Activated CD4-positive, alpha-beta memory T cell treated with anti-CD3 and anti-CD28 coated beads for 36 hours (primary cell): ENCODE measurements at regions of chr10 and their contacts with region 1.

Region 1: DNA sequence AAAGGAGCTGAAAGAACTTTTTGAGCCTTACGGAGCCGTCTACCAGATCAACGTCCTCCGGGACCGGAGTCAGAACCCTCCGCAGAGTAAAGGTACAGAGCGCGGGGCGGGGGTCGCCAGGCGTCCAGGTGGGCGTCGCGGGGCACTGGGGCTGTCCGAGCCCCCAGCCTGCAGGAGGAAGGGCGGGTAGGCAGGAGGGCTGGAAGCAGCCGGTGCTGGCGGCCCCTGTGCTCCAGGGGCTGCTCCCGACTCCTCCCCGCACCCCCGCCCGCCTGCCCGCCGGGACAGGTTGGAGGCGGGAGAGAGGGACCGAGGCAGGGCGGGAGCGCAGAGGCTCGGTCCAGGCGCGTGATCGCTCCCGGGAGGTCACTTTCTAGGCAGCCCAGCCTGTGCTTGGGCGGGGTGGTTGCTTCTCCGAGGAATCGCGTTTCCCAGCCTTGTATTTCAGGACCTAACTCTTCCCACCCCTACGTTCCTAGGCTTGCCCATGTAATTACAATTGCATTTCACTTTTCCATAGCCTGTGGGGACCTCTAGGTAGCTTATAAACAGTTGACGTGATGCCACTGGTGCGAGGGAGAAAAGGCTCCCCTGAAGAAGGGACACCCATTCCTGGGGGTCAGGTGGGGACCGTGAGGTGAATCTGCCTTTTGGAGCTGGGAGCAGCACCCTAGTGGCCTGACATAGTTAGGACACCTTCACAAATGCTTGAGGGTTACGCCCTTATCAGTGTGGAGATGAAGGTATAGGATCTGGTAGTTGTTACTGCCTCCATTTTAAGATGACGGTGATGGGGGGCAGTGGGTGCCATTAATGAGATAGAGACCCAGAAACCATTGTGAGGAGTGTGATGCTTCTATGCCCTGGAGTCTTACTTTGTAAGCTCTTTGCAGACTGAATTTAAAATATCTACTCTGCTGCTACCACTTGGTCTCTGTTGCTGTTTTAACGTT is 148.2 kb downstream of the CELF2 start:
- DNase-seq: peak; percentile 83
- H3K4me3 Mint-ChIP-seq: no peak overlapping the region
- H3K27ac Mint-ChIP-seq: peak overlapping the region; percentile 100
- H3K4me1 Mint-ChIP-seq: peaks cover 23% of the 10 kb centered on the region
- H3K27me3 Mint-ChIP-seq: no peaks in the 10 kb centered on the region

Region 2: DNA sequence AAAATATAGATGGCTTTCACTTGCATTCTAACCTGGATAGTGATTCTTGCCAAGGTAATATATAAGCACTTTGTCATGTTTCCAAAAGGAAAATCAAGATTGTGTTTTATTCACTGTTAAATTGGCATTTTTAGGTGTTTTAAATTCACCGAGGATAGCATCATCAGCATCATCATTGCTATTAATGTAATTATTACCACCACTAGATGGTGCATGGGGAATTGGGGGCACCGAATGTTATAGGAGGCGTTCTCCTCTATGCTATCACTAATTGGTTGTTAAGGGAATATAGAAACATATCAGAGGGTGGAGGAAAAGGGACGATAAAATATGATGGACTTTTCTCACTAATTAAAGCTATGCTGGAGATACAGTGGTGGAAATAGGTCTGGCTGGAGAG is 52.7 kb before region 1 on chr10:
- CTCF ChIA-PET with region 1: interaction called, 22 read pairs
- POLR2A ChIA-PET with region 1: no interaction called
- intact Hi-C with region 1: loop called (anchors 1 kb)
- DNase-seq: peak; percentile 19
- H3K4me3 Mint-ChIP-seq: no peak overlapping the region
- H3K27ac Mint-ChIP-seq: peak overlapping the region; percentile 10
- H3K4me1 Mint-ChIP-seq: peaks cover 20% of the 10 kb centered on the region
- H3K27me3 Mint-ChIP-seq: no peaks in the 10 kb centered on the region

Region 3: DNA sequence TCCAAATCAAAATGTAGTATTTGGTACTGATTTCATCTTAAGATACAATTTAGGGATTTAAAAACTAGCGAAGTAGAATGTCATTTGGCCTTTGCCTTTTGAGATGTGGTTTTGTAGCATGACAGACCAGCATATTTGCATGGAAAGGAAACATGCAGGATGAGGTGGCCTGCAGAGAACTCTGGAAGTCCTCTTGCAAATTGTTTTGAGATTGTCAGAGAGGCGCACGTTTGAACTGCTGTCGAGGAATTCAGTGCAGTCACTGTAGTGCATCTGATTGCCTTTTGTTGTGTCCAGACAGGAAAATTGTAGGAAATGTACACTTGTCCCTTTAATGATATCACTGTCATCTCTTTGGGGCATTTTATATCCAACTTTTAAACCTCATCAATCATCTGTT is 11.5 kb before region 1 on chr10:
- CTCF ChIA-PET with region 1: interaction called, 96 read pairs
- POLR2A ChIA-PET with region 1: interaction called, 170 read pairs
- intact Hi-C with region 1: loop called (anchors 1 kb)
- DNase-seq: no peak
- H3K4me3 Mint-ChIP-seq: peak overlapping the region; percentile 23
- H3K27ac Mint-ChIP-seq: peak overlapping the region; percentile 34
- H3K4me1 Mint-ChIP-seq: peaks cover 81% of the 10 kb centered on the region
- H3K27me3 Mint-ChIP-seq: no peaks in the 10 kb centered on the region

Region 4: DNA sequence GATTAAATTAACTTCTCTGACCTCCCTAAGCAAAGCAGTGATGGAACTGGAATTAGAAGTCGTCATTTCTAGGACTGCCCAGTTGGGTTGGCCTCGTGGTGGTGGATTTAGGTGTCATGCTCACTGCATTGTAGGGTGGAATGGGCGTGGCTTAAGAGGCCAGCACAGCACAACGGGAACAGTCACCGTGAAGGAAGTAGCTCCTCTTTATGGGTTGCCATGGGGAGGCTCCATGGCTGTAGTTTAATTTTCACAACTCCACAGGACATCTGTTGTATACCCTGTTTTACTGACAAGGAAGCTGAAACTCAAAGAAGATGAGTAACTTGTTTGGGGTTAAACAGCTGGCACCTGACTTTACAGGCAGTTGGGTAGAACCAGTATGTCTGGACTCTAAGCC is 60.1 kb after region 1 on chr10:
- CTCF ChIA-PET with region 1: interaction called, 9 read pairs
- POLR2A ChIA-PET with region 1: interaction called, 40 read pairs
- intact Hi-C with region 1: no loop called
- DNase-seq: peak; percentile 88
- H3K4me3 Mint-ChIP-seq: peak overlapping the region; percentile 62
- H3K27ac Mint-ChIP-seq: peak overlapping the region; percentile 97
- H3K4me1 Mint-ChIP-seq: peaks cover 95% of the 10 kb centered on the region
- H3K27me3 Mint-ChIP-seq: no peaks in the 10 kb centered on the region

Region 5: DNA sequence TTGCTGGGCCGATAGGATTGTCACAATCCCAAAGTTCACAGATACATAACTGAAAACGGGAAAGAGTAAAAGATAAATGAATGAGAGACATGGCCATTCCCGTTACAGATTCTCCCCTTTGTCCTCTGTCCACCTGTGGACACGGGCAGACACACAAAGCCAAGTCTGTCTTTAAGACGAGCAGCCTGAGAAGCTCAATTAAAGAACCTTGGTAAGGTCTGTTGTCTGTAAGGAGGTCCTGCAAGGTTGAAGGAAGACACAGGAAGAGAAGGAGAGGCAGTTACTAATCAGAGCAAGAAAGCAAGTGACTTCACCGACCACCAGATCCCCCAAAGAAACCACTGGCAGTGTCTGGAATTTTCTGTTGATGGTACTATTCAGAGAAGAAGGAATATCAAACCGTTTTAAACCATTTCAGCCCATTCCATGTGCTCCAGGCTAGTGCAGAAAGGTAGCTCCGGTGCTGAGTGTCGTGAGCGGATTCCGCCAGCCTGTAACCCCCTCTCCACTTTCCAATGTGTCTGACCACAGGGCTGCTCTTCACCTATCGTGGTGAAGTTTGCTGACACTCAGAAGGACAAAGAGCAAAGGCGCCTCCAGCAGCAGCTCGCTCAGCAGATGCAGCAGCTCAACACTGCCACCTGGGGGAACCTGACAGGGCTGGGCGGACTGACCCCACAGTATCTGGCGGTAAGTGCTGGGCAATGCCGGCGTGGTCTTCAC is 104.4 kb after region 1 on chr10:
- CTCF ChIA-PET with region 1: interaction called, 33 read pairs
- POLR2A ChIA-PET with region 1: interaction called, 11 read pairs
- intact Hi-C with region 1: loop called (anchors 1 kb)
- DNase-seq: peak; percentile 85
- H3K4me3 Mint-ChIP-seq: peak overlapping the region; percentile 25
- H3K27ac Mint-ChIP-seq: peak overlapping the region; percentile 52
- H3K4me1 Mint-ChIP-seq: peaks cover 90% of the 10 kb centered on the region
- H3K27me3 Mint-ChIP-seq: no peaks in the 10 kb centered on the region